ENCODE measurements at regions of chr10 and their contacts with region 1.

Region 1: DNA sequence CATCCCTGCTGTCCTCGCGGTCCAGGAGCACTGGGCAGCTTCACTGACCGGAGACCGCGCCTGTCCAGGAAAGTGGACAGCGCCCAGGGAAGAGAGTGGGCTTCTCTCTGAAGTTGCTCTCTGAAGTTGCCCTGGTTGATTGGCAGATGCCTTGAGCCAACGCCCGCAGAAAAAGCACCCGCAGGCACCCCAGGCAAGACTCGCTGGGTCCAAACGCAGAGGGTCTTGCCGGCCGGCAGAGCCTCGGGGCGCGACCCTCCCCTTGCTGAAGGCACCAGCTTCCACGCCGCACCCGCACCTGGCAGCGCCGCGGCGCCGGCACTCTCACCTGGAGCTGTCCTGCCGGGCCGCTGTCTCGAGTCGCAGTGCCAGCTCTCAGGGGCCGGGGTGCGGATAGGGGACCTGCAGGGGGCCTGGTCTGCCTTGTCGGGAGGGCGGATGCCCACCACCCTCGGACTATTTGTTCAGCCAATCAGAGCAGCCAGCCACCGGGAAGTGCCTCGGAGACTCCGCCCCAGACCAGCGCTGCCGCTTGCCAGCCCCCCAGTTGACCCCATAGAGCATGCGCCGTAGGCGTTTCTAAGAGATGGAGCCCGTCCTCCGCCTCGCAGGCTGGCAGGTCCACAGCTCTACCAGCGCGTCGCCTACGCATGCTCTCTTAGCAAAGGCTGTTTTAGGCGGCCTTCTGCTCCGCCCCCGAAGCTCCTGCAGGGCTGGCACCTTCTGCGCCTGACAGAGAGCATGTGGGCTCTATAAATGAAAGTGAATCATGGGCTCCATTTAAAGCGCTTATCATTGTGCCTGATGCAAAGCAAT is at the start of gene LIPA:
- DNase-seq: peak; percentile 96
- H3K4me3 Mint-ChIP-seq: peak within 1 kb of the TSS; percentile 83
- H3K27ac Mint-ChIP-seq: peak within 1 kb of the TSS; percentile 46
- H3K4me1 Mint-ChIP-seq: peaks cover 30% of the 10 kb centered on the region
- H3K27me3 Mint-ChIP-seq: no peaks in the 10 kb centered on the region
- total RNA-seq, gene LIPA: 22.7 to 23.8 TPM

Region 2: GRCh38 chr10:89207181-89207800 is 44.3 kb before region 1 on chr10 and contains the start of gene CH25H:
- CTCF ChIA-PET with region 1: no interaction called
- POLR2A ChIA-PET with region 1: no interaction called
- intact Hi-C with region 1: no loop called
- DNase-seq: peak; percentile 71
- H3K4me3 Mint-ChIP-seq: peak within 1 kb of the TSS; percentile 64
- H3K27ac Mint-ChIP-seq: no peak within 1 kb of the TSS
- H3K4me1 Mint-ChIP-seq: peaks cover 11% of the 10 kb centered on the region
- H3K27me3 Mint-ChIP-seq: peaks cover 29% of the 10 kb centered on the region
- total RNA-seq, gene CH25H: 0.12 TPM in 1 of 2 experiments, not detected in the other

Region 3: DNA sequence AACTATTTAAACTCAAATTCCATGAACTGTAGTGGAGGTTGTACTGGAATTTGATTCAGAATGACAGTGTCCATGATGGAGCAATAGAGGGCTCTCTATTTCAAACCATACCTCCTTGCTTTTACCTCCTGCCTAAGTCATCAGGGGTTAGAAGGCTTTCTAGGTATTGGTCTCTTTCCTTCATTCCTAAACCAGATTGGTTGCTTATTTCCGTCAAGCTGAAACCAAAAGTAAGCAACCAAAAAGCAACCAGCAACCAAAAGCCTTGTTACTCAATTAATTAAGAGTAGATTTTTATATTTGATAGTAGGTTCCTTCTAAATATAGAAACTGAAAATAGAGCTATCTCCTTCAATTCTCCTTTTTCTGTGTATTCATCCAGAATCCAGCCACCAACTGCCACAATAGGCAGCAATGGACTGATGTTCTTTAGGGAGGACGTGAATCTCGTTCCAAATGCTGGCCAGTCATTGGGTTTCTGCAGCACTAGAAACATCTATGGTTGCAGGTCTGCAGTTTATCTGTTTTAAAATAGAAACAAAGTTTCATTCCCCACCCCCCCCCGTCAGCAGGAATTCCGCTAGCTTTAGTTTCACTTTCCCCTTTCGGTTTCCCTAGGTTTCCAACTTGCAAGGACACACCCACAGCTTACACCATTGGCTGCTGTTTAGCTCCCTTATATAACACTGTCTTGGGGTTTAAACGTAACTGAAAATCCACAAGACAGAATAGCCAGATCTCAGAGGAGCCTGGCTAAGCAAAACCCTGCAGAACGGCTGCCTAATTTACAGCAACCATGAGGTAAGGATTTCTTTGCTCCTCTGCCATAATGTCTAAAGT is 140.5 kb after region 1 on chr10 and contains the start of gene IFIT1:
- CTCF ChIA-PET with region 1: no interaction called
- POLR2A ChIA-PET with region 1: no interaction called
- intact Hi-C with region 1: loop called (anchors 1 kb)
- DNase-seq: peak; percentile 47
- H3K4me3 Mint-ChIP-seq: peak within 1 kb of the TSS; percentile 74
- H3K27ac Mint-ChIP-seq: peak within 1 kb of the TSS; percentile 38
- H3K4me1 Mint-ChIP-seq: peaks cover 27% of the 10 kb centered on the region
- H3K27me3 Mint-ChIP-seq: no peaks in the 10 kb centered on the region
- total RNA-seq, gene IFIT1: 5.2 to 5.5 TPM

Region 4: DNA sequence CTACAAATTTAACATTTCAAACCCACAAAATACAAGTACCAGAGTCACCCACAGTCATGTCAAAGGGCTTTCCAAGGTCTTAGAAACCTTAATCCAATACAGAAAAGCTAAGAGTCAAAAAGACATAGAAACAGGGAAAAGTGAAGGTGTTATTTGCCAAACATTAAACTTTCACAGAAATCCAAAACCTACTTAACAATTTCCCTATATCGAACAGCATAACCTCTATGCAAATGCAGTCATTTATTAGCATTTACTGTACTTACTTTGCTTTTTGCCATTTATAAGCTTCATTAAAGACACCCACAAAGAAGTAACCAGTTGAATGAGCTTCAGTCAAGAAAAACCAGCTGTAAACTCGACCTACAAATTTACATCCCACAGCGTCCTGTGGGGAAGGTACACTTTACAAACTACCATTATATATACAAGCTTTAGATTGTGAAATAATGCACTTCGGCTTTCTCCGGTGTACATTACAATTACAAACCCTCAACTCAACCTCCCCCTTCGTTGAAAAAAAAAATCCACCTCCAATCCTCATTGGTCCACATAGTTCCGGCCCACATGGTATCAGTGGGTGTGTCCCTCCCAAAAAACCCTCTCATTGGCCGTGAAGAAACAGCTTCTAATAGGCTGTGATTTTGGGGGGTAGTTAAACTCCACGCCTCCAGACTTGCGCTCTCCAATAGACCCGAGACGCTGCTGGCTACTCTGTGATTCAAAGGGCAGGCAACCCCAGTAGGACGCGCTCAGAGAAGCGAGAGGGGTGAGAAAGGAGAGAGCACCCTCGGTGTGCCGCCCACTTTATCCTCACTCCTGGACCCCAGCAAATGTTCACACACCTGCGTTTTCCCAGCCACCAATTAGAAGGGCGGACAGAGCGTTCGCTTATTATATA is 392.1 kb after region 1 on chr10:
- CTCF ChIA-PET with region 1: no interaction called
- POLR2A ChIA-PET with region 1: no interaction called
- intact Hi-C with region 1: loop called (anchors 2 kb)
- DNase-seq: peak; percentile 81
- H3K4me3 Mint-ChIP-seq: no peak overlapping the region
- H3K27ac Mint-ChIP-seq: no peak overlapping the region
- H3K4me1 Mint-ChIP-seq: peaks cover 7% of the 10 kb centered on the region
- H3K27me3 Mint-ChIP-seq: no peaks in the 10 kb centered on the region